Sigmoid colon (tissue), 7 donors: ENCODE measurements at regions of chr1 and their contacts with region 1.

Region 1: GRCh38 chr1:227886993-227887696 is 60.6 kb downstream of the WNT9A start:
- DNase-seq: peak; percentile 92
- H3K4me3 ChIP-seq: peak overlapping the region; percentile 52 to 72 (median 62)
- H3K27ac ChIP-seq: peak overlapping the region; percentile 91 to 99 (median 96)
- H3K4me1 ChIP-seq: peaks cover 0 to 33% (median 22%) of the 10 kb centered on the region in 4 donors
- H3K27me3 ChIP-seq: no peaks in the 10 kb centered on the region
- CTCF ChIP-seq: no peak
- EP300 ChIP-seq: peak in 2 of 4 donors; percentile 69 to 70
- POLR2A ChIP-seq: peak in 1 of 2 donors; percentile 13

Region 2: DNA sequence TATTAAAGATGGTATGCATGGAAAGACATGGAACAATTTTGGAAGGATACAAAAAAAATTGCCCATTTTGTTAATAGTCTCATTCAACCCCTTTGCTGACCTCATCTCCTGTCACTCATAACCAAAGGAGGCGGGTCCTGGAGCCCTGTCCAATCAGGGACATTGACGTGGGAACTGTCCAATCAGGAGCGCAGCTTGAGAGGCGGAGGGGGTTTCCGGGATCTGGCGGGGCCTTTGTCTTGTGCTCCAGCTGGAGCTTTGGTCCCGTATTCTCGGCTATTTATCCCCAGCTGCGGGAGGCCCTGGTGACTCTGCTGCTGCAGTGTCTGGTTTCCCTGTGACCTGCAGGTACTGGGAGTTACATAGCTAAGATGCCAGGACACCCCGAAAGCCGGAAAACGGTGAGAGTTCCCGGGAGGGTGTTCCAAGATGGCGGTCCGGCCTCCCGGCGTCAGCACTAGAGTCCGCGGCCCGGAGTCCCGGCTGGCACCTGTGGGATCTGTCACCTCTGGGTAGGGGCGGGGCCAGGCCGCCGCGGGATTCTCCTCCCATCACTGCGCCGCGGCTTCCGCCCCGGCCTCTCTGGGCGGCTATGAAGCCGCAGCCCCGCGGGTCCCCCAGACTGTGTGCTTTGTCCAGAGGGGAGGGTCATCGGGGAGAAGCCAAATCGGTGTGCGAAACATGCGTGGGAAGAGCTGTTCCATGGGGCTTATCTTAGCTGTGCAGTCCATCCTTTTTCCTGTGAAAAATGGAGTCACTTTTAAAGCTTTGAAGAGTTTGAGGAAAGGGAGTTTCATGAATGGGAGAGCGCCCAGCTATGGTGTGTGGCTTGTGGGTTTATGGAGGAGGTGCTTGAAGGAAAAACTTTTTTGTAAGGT is 323.6 kb before region 1 on chr1 and contains the start of gene ZNF678:
- intact Hi-C with region 1: loop called (anchors 10 kb)
- DNase-seq: peak; percentile 96
- H3K4me3 ChIP-seq: peak within 1 kb of the TSS; percentile 51 to 78 (median 65)
- H3K27ac ChIP-seq: peak within 1 kb of the TSS; percentile 82 to 90 (median 86)
- H3K4me1 ChIP-seq: peaks cover 0 to 9% (median 6%) of the 10 kb centered on the region in 4 donors
- H3K27me3 ChIP-seq: peaks cover 6 to 32% (median 20%) of the 10 kb centered on the region in 3 donors
- CTCF ChIP-seq: no peak
- EP300 ChIP-seq: no peak
- POLR2A ChIP-seq: peak; percentile 21 to 53
- total RNA-seq, gene ZNF678: 5.3 to 15.3 (median 8.4) TPM

Region 3: DNA sequence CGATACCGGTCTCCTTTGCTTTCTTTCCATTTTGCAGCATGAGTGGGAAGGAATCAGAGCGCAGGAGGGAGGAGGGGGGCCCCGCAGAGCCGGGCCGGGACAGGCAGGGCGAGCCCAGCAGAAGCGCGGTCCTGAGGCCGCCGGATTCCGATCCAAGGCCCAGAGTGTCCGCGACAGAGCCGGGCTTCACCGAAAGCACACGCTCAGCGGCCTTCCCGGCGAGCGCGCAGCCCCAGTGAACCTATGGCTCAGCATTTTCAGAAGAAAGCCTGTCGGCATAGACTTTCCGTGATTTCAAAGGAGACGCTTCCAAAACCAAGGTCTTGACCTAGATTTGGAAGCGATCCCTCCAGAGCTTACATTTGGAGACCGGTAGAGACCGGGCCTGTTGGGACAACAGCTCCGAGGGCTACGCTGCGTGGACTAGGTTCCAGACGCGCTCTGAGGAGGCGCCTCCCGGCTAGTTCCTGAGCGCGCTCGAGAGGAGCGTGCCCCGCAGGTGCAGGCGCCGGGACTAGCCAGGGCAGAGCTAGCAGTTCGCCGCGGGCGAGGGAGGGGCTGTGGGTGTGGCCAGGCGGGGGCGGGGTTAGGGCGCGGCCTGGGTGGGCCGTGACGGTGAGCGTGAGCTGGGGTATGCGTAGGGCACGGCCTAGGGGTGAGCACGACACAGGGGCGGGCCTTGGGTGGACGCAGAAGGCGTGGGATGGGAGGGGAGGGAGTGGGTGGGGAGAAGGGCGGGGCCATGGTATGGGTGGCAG is 99.5 kb before region 1 on chr1:
- intact Hi-C with region 1: loop called (anchors 1 kb)
- DNase-seq: peak; percentile 97
- H3K4me3 ChIP-seq: peak overlapping the region; percentile 50 to 61 (median 54)
- H3K27ac ChIP-seq: peak overlapping the region; percentile 71 to 84 (median 80)
- H3K4me1 ChIP-seq: peaks cover 0 to 29% (median 19%) of the 10 kb centered on the region in 4 donors
- H3K27me3 ChIP-seq: no peaks in the 10 kb centered on the region
- CTCF ChIP-seq: no peak
- EP300 ChIP-seq: no peak
- POLR2A ChIP-seq: peak; percentile 28 to 51